BJ (cell line): ENCODE measurements at regions of chr1 and their contacts with region 1.

Region 1: DNA sequence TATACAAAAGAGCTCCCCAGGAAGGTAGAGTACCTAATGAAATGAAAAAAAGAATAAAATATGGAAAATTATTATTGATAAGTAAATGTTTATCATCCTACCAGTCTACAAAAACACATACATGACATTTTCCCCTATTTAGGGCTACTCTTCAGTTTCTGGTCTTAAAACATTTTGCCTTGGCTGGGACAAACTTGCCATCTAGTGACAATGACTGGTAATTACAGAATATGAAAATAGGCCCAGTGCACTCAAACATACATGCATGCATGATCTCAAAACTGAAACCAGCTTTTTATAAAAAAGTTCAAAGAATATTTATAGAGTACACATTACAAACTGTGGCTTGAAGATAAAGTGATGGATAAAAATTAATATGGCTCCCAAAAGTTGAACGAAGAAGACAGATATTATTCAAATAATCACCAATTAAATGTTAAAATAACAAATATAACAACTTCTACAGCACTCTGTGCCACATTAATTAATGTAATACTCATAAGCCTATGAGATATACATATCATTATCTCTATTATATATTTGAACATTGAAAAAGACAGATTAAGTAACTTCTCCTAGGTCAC is 10.5 kb upstream of the RNPC3 start:
- DNase-seq: no peak
- H3K4me3 ChIP-seq: no peak overlapping the region
- H3K27me3 ChIP-seq: no peaks in the 10 kb centered on the region
- CTCF ChIP-seq: peak; percentile 70

Region 2: GRCh38 chr1:103063921-103064320 is 451.1 kb before region 1 on chr1:
- CTCF ChIA-PET with region 1: no interaction called
- POLR2A ChIA-PET with region 1: no interaction called
- DNase-seq: no peak
- H3K4me3 ChIP-seq: no peak overlapping the region
- H3K27me3 ChIP-seq: no peaks in the 10 kb centered on the region
- CTCF ChIP-seq: no peak

Region 3: DNA sequence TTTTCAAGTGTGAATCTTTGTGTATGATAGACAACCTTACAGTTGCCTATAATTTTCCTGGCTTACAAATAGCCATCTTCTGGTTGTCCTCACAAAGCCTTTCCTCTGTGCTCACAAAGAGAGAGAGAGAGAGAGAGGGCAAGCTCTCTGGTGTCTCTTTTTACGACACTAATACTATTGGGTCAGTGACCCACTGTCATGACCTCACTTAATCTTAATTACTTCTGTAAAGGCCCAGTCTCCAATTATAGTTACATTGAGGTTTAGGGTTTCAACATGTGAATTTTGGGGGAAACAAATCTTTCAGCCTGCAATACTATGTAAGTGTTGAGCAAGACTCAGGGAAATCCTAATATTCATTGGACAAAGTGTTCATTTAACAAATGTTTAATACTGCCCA is 239.3 kb before region 1 on chr1:
- CTCF ChIA-PET with region 1: no interaction called
- POLR2A ChIA-PET with region 1: no interaction called
- DNase-seq: peak; percentile 32
- H3K4me3 ChIP-seq: no peak overlapping the region
- H3K27me3 ChIP-seq: no peaks in the 10 kb centered on the region
- CTCF ChIP-seq: no peak

Region 4: GRCh38 chr1:103489935-103490334 is 25.1 kb before region 1 on chr1:
- CTCF ChIA-PET with region 1: no interaction called
- POLR2A ChIA-PET with region 1: no interaction called
- DNase-seq: no peak
- H3K4me3 ChIP-seq: no peak overlapping the region
- H3K27me3 ChIP-seq: no peaks in the 10 kb centered on the region
- CTCF ChIP-seq: no peak

Region 5: GRCh38 chr1:103525607-103526507 is 10.8 kb after region 1 on chr1 and contains the start of gene RNPC3:
- CTCF ChIA-PET with region 1: interaction called, 13 read pairs
- POLR2A ChIA-PET with region 1: no interaction called
- DNase-seq: peak; percentile 67
- H3K4me3 ChIP-seq: peak within 1 kb of the TSS; percentile 83
- H3K27me3 ChIP-seq: no peaks in the 10 kb centered on the region
- CTCF ChIP-seq: 0 out of 2 replicates have a peak, but pooled peaks have one; percentile 5
- polyA plus RNA-seq, gene RNPC3: 13.3 and 15.2 TPM in 2 replicates